BJ (cell line): ENCODE measurements at regions of chr17 and their contacts with region 1.

Region 1: GRCh38 chr17:18217412-18218015 is 7.9 kb upstream of the LLGL1 start:
- DNase-seq: no peak
- H3K4me3 ChIP-seq: no peak overlapping the region
- H3K27me3 ChIP-seq: no peaks in the 10 kb centered on the region
- CTCF ChIP-seq: peak; percentile 97

Region 2: DNA sequence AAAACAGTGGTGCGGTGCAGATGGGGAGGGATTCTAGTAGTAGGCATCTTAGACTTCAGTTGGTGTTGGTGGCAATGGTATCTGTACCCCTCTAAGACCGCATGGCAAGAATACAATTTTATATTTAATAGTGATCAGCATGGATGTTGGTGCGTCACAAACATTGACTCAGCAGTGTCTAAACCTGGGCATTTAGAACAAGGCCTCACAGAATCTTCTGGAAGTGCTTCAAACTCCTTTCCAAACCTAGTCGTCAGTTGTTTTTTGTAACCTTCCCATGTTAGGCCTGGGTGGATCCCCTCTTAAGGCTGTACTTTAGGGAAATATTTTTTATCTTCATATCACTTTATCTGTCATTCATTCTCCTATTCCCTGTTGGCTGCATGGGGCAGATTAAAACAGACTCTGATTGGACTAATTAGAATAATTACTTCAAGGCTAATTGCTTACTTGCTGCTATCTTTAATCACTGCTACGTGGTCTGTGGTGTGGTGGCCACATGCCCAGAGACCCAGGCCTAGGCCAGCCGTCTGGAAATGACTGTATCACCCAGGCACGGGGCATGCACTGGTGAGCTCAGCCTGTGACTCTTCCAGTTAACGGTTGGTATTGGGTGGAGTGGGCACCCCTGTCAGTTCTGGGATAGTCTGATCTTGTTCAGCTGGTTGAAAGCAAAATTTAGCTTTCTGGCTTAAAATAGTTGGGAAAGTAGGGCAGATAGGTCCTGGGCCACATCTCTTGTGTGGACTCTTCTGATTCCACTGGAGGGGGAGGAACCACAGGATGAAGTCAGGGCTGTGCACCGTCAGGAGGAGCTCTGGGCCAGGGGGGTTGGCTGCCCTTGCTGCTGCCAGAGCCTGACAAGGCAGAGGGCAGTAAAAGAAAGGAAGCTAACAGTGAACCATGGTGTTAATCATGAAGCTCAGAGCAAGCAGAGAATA is 29.4 kb before region 1 on chr17:
- CTCF ChIA-PET with region 1: interaction called, 14 read pairs
- POLR2A ChIA-PET with region 1: no interaction called
- DNase-seq: no peak
- H3K4me3 ChIP-seq: peak overlapping the region; percentile 88
- H3K27me3 ChIP-seq: no peaks in the 10 kb centered on the region
- CTCF ChIP-seq: 0 out of 2 replicates have a peak, but pooled peaks have one; percentile 3

Region 3: DNA sequence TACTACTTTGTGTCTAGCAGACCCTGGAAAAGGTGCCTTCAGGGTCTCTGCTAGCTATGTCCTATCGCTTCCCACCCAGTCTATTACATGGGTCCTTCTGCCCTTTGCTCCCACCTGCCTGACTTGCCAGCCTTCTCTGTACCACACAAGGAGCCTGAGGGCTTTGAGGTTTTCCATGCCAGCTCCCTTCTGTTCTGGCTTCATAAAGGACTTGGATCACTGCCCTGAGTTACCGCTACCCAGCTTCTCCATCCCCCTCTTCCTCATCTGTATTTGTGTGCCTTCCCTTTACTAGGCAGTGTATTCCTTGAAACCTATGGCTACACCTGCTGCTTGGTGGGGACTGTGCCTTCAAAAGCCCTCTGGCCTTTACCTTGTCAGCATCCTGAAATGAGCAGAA is 11.7 kb before region 1 on chr17:
- CTCF ChIA-PET with region 1: interaction called, 34 read pairs
- POLR2A ChIA-PET with region 1: no interaction called
- DNase-seq: no peak
- H3K4me3 ChIP-seq: no peak overlapping the region
- H3K27me3 ChIP-seq: no peaks in the 10 kb centered on the region
- CTCF ChIP-seq: no peak